Activated CD8-positive, alpha-beta T cell treated with anti-CD3 and anti-CD28 coated beads for 36 hours (primary cell): ENCODE measurements at regions of chr19 and their contacts with region 1.

Region 1: DNA sequence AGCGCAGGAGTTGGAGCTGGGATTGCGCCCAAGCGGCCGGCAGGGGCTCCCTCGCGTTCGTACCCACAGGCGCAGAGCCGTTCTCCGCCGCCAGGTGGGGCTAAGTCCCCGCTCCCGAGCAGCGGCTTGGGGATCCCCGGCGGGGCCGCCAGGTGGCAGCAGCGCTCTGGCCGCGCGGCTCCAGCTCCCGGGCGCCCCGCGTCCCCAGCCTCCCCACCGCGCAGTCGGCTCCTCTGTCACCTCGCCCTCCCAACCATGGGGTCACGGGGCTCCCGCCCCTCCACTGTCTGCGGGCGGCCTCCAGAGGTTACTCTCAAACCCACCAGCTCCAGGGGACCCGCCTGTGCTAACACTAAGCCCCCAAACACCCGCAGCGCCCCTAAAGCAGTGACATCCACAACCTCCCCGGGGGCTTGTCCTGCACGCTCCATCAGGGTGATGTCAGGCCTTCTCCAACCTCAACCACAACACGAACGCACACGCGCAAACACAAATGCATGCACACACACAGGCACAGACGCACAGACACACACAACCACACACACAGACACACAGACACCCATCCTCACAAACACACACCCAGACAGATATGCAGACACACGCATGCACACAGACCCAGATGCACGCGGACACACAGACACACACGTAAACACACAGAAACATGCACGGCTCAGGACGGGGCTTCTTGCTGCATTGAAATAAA is 18.4 kb upstream of the KCTD15 start:
- DNase-seq: peak; percentile 86
- ATAC-seq: peak; percentile 97
- H3K4me3 Mint-ChIP-seq: no peak overlapping the region
- H3K27ac Mint-ChIP-seq: no peak overlapping the region
- H3K4me1 Mint-ChIP-seq: peaks cover 3% of the 10 kb centered on the region
- H3K27me3 Mint-ChIP-seq: peaks cover 29% of the 10 kb centered on the region
- CTCF ChIP-seq: peak; percentile 100

Region 2: GRCh38 chr19:33486936-33487811 is 291.1 kb before region 1 on chr19:
- CTCF ChIA-PET with region 1: no interaction called
- POLR2A ChIA-PET with region 1: no interaction called
- intact Hi-C with region 1: no loop called
- DNase-seq: no peak
- ATAC-seq: no peak
- H3K4me3 Mint-ChIP-seq: no peak overlapping the region
- H3K27ac Mint-ChIP-seq: no peak overlapping the region
- H3K4me1 Mint-ChIP-seq: no peaks in the 10 kb centered on the region
- H3K27me3 Mint-ChIP-seq: no peaks in the 10 kb centered on the region
- CTCF ChIP-seq: no peak

Region 3: GRCh38 chr19:33755099-33756035 is 22.9 kb before region 1 on chr19:
- CTCF ChIA-PET with region 1: interaction called, 10 read pairs
- POLR2A ChIA-PET with region 1: no interaction called
- intact Hi-C with region 1: no loop called
- DNase-seq: no peak
- ATAC-seq: no peak
- H3K4me3 Mint-ChIP-seq: no peak overlapping the region
- H3K27ac Mint-ChIP-seq: no peak overlapping the region
- H3K4me1 Mint-ChIP-seq: no peaks in the 10 kb centered on the region
- H3K27me3 Mint-ChIP-seq: no peaks in the 10 kb centered on the region
- CTCF ChIP-seq: no peak

Region 4: GRCh38 chr19:33819880-33820781 is 41.9 kb after region 1 on chr19:
- CTCF ChIA-PET with region 1: interaction called, 23 read pairs
- POLR2A ChIA-PET with region 1: no interaction called
- intact Hi-C with region 1: no loop called
- DNase-seq: peak; percentile 76
- ATAC-seq: peak; percentile 83
- H3K4me3 Mint-ChIP-seq: peak overlapping the region; percentile 61
- H3K27ac Mint-ChIP-seq: no peak overlapping the region
- H3K4me1 Mint-ChIP-seq: peaks cover 11% of the 10 kb centered on the region
- H3K27me3 Mint-ChIP-seq: peaks cover 21% of the 10 kb centered on the region
- CTCF ChIP-seq: no peak

Region 5: GRCh38 chr19:34041925-34042521 is 263.8 kb after region 1 on chr19:
- CTCF ChIA-PET with region 1: interaction called, 11 read pairs
- POLR2A ChIA-PET with region 1: no interaction called
- intact Hi-C with region 1: no loop called
- DNase-seq: peak; percentile 88
- ATAC-seq: peak; percentile 74
- H3K4me3 Mint-ChIP-seq: no peak overlapping the region
- H3K27ac Mint-ChIP-seq: no peak overlapping the region
- H3K4me1 Mint-ChIP-seq: no peaks in the 10 kb centered on the region
- H3K27me3 Mint-ChIP-seq: peaks cover 19% of the 10 kb centered on the region
- CTCF ChIP-seq: peak; percentile 97

Region 6: GRCh38 chr19:34096020-34096915 is 318.0 kb after region 1 on chr19:
- CTCF ChIA-PET with region 1: interaction called, 48 read pairs
- POLR2A ChIA-PET with region 1: no interaction called
- intact Hi-C with region 1: loop called (anchors 5 kb)
- DNase-seq: no peak
- ATAC-seq: no peak
- H3K4me3 Mint-ChIP-seq: no peak overlapping the region
- H3K27ac Mint-ChIP-seq: no peak overlapping the region
- H3K4me1 Mint-ChIP-seq: no peaks in the 10 kb centered on the region
- H3K27me3 Mint-ChIP-seq: peaks cover 11% of the 10 kb centered on the region
- CTCF ChIP-seq: peak; percentile 57